ENCODE measurements at regions of chr3 and their contacts with region 1.

Region 1: GRCh38 chr3:123642182-123642956 is 57.5 kb upstream of the HACD2 start:
- DNase-seq: peak; percentile 96
- H3K4me3 ChIP-seq: no peak overlapping the region
- H3K27ac ChIP-seq: no peak overlapping the region
- H3K27me3 ChIP-seq: no peaks in the 10 kb centered on the region
- CTCF ChIP-seq: peak; percentile 96

Region 2: GRCh38 chr3:123719862-123720453 is 77.6 kb after region 1 on chr3:
- in situ Hi-C with region 1: loop called (anchors 10 kb)
- DNase-seq: no peak
- H3K4me3 ChIP-seq: no peak overlapping the region
- H3K27ac ChIP-seq: no peak overlapping the region
- H3K27me3 ChIP-seq: no peaks in the 10 kb centered on the region
- CTCF ChIP-seq: no peak

Region 3: DNA sequence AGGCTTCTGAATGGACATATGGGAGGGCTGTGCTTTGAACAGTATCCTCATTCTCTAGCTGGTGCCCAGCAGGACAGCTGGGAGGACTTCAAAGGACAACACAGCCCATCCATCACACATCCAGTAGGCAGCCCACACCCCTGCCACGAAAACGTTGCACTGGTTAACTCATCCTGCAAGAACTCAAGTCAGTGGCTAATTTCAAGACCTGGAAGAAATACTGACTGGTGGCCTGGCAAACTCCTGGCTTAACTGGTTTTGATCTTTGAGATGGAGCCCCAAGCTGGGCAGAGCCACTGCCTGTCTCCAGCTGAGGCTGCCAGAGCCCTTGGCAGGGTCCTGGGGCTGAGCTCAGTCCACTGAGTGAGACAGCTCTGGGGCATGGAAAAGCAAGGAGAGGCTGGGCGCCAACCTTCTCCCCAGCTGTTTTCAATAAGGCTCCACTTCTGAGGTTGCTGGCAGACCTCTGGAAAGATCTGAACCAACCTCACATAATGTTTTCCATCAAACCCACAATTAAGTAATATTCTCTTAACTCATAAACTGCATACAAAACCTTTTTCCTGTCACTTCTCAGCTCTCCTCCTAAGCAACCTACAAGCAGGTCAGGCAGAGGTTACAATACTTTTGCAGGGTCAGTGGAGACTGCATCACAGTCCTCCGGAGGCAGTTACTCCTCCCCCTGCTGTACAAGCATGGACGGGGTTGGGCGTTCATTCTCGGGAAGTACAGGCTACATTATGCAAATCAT is 131.5 kb after region 1 on chr3:
- in situ Hi-C with region 1: no loop called
- DNase-seq: no peak
- H3K4me3 ChIP-seq: no peak overlapping the region
- H3K27ac ChIP-seq: no peak overlapping the region
- H3K27me3 ChIP-seq: no peaks in the 10 kb centered on the region
- CTCF ChIP-seq: no peak

Region 4: DNA sequence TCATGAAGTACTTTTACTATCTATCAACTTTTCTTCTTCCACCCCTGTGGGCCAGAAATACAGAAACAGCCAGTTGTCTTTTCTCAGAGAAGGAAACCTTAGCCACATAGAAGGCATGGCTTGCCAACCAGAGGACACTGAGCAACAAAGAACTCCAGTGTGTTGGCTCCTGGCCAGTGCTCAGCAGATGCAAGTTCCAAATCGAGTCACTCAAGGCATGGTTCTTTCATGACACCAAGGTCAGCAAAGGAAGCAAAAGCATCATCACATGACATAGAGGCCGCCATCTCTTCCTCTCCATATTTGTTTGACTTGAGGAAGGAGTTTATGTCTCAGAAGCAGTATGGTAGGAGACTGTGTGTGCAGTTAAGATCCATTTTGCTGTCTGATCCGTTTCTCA is 149.5 kb after region 1 on chr3:
- in situ Hi-C with region 1: no loop called
- DNase-seq: no peak
- H3K4me3 ChIP-seq: no peak overlapping the region
- H3K27ac ChIP-seq: no peak overlapping the region
- H3K27me3 ChIP-seq: no peaks in the 10 kb centered on the region
- CTCF ChIP-seq: no peak

Measured in brain microvascular endothelial cell (primary cell).